Sigmoid colon (tissue), 7 donors: ENCODE measurements at regions of chr7 and their contacts with region 1.

Region 1: GRCh38 chr7:136009488-136010079 is 32.4 kb upstream of the MTPN start:
- DNase-seq: no peak
- H3K4me3 ChIP-seq: no peak overlapping the region
- H3K27ac ChIP-seq: no peak overlapping the region
- H3K4me1 ChIP-seq: peaks cover 0 to 5% (median 2%) of the 10 kb centered on the region in 4 donors
- H3K27me3 ChIP-seq: no peaks in the 10 kb centered on the region
- CTCF ChIP-seq: peak; percentile 56 to 73 (median 64)
- EP300 ChIP-seq: no peak
- POLR2A ChIP-seq: no peak

Region 2: DNA sequence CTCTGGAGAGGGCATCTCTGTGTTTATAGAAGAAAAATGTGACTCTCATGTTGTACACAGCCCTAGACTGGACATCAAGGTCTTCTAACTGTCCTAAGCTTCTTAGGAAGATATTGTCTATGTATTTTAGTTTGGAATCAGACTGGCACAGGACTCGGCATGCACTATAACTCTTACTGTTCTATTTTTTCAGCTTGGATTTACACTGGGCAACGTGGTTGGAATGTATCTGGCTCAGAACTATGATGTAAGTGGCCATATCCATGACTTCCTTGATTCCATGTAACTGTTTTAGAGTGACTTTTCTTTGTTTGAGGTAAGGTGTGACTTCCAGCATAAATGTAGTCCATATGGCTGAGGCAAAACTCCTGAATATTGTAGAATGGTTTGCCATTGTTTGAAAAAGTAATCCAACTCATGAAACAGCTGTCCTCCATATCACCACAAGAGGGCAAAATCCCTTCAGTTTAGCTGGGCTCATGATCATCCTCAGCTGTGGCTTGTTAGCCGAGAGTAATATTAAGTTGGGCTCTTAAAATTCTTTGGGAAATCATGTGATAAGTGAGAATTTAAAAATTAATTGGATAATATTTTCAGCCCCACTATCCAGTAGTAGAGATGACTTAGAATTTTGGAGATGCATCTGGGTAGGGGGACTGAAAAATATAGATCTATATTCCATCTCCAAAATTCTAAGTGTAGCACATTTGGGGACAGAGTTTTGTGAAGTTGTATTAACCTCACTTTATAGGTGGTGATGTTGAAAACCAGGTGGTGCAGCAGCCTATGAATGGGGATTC is 336.8 kb before region 1 on chr7:
- intact Hi-C with region 1: loop called (anchors 2 kb)
- DNase-seq: no peak
- H3K4me3 ChIP-seq: no peak overlapping the region
- H3K27ac ChIP-seq: peak overlapping the region in 3 of 4 donors; percentile 0 to 41 (median 40)
- H3K4me1 ChIP-seq: peaks cover 0 to 33% (median 30%) of the 10 kb centered on the region in 4 donors
- H3K27me3 ChIP-seq: no peaks in the 10 kb centered on the region
- CTCF ChIP-seq: peak; percentile 62 to 82 (median 72)
- EP300 ChIP-seq: no peak
- POLR2A ChIP-seq: no peak

Region 3: GRCh38 chr7:136293272-136293671 is 283.7 kb after region 1 on chr7:
- intact Hi-C with region 1: no loop called
- DNase-seq: no peak
- H3K4me3 ChIP-seq: no peak overlapping the region
- H3K27ac ChIP-seq: peak overlapping the region in 3 of 4 donors; percentile 51 to 68 (median 67)
- H3K4me1 ChIP-seq: peaks cover 0 to 31% (median 17%) of the 10 kb centered on the region in 4 donors
- H3K27me3 ChIP-seq: no peaks in the 10 kb centered on the region
- CTCF ChIP-seq: no peak
- EP300 ChIP-seq: no peak
- POLR2A ChIP-seq: no peak